Right ventricle myocardium superior (tissue), 1 donor: ENCODE measurements at regions of chr12 and their contacts with region 1.

Region 1: DNA sequence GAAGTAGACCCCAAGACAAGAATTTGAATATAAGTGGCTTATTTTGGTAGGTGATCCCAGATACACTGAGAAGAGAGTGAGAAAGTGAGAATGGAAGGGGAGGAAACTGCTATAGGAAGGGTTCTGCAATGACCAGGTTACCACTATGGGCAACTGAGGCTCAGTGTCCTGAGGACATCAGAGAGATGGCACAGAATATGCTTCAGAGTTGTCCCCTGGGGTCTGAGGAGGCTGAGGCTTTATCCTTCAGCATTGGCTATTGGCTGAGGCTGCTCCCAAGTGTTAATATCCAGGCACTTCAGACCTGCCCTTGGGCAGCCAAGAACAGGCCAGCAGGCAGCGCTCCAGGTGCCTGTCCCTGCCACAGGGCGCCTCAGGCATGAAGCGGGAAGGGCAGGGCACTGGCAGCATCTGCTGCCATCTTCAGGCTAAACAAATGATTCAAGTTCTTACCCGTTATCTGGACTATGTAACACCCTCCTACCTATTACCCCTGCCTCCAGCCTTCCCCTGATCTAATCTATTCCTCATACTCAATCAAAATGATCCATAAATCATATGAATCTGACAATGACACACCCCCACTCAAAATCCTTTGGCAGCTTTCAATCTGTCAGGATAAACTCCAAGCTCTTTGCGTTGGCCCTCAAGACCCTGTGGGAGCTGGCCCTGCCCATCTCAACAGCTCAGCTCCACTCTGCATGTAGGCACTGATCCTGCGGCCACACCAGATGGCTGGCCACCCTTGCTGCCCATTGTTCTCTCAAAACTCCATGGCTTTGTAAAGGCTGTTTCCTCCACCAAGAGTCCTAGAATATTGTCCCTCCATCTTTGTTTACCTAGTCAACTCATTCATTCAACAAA is 42.4 kb downstream of the CKAP4 start:
- DNase-seq: peak; percentile 81
- ATAC-seq: peak; percentile 99

Region 2: DNA sequence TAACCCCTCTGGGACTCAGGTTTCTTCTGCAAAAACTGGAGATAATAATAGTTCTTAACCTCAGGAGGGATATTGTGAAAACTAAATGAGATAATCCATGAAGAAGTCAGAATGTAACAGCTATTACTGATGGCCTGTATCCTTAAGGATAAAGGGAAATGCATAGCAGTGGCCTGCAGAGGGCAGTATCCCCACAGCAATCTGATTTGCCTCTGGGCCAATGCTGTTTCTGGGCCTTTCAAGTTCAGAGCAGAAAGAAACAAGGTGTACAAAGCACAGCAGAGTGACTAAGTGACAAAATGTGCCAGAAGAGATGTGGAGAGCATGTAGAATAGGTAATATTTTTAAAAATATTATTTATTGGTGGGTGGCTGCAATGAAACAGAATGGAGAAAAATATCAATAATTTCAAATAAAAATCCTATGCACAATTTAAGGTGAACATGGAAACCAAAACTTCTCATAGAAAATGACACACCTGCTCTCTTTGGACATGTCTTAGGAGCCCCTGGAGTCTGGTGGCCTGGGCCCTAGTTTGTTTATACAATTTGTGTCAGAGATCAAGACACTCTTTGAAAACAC is 784.7 kb before region 1 on chr12:
- intact Hi-C with region 1: loop called (anchors 5 kb)
- DNase-seq: peak; percentile 68
- ATAC-seq: peak; percentile 96

Region 3: DNA sequence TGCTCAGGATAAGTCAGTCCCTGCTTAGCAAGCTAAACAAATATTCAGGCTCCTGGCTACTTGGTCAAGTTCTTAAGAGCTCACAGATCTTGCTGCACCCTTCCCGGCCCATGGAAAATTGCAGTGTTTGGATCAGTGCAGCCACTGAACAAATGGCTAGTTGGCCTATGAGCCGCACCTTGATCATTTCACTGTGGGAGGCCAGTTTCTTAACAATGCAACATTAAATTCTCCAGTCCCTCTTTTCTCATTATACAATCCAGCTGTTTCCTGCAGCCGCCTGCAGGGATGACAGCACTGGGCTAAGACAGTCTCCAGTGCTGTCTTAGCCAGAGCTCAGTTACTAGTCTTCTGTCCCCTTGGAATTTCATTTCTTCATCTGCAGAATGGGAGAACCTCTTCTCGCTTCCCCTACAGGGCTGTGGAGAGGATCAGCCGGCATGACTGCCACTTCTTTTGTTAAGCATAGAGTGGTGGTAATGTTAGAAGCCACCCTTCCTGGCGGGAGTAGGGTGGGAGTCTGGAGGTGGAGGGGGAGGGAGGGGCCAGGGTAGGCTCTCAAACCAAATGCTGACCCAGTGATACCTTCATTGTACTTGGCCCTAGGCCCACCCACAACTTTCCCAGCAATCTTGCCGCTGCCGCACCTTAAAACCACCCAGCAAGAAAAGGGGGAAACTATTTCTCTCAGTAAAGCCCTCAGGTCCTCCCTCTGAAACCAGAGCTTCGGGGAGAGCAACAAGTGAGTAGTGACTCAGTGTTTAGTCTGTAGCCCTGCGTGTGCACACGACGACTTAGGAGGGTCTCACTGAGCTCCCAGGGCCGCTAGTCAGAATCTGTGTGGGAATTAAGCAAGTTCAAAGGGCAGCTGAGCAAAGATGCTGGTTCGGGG is 212.3 kb before region 1 on chr12:
- intact Hi-C with region 1: no loop called
- DNase-seq: no peak
- ATAC-seq: peak; percentile 58